CD4-positive, alpha-beta memory T cell (primary cell): ENCODE measurements at regions of chr9 and their contacts with region 1.

Region 1: GRCh38 chr9:73132034-73132776 is 19.5 kb upstream of the ANXA1 start:
- DNase-seq: peak; percentile 84 to 90 (median 89)
- H3K4me3 ChIP-seq: peak overlapping the region; percentile 62 to 75
- H3K4me3 Mint-ChIP-seq: peak overlapping the region; percentile 70 to 95 (median 92)
- H3K27ac ChIP-seq: peak overlapping the region; percentile 91
- H3K27ac Mint-ChIP-seq: peak overlapping the region; percentile 84 to 99 (median 97)
- H3K4me1 ChIP-seq: peaks cover 47% of the 10 kb centered on the region
- H3K4me1 Mint-ChIP-seq: peaks cover 24 to 50% (median 35%) of the 10 kb centered on the region in 4 donors
- H3K27me3 ChIP-seq: no peaks in the 10 kb centered on the region
- H3K27me3 Mint-ChIP-seq: no peaks in the 10 kb centered on the region

Region 2: GRCh38 chr9:73116031-73116430 is 16.2 kb before region 1 on chr9:
- CTCF ChIA-PET with region 1: interaction called, 4 read pairs
- POLR2A ChIA-PET with region 1: interaction called, 9 read pairs
- intact Hi-C with region 1: loop called (anchors 2 kb)
- DNase-seq: no peak
- H3K4me3 ChIP-seq: no peak overlapping the region
- H3K4me3 Mint-ChIP-seq: peak overlapping the region in 1 of 8 donors; percentile 18
- H3K27ac ChIP-seq: no peak overlapping the region
- H3K27ac Mint-ChIP-seq: peak overlapping the region in 4 of 7 donors; percentile 55 to 72 (median 63)
- H3K4me1 ChIP-seq: peaks cover 35% of the 10 kb centered on the region
- H3K4me1 Mint-ChIP-seq: peaks cover 23 to 45% (median 33%) of the 10 kb centered on the region in 4 donors
- H3K27me3 ChIP-seq: no peaks in the 10 kb centered on the region
- H3K27me3 Mint-ChIP-seq: no peaks in the 10 kb centered on the region

Region 3: DNA sequence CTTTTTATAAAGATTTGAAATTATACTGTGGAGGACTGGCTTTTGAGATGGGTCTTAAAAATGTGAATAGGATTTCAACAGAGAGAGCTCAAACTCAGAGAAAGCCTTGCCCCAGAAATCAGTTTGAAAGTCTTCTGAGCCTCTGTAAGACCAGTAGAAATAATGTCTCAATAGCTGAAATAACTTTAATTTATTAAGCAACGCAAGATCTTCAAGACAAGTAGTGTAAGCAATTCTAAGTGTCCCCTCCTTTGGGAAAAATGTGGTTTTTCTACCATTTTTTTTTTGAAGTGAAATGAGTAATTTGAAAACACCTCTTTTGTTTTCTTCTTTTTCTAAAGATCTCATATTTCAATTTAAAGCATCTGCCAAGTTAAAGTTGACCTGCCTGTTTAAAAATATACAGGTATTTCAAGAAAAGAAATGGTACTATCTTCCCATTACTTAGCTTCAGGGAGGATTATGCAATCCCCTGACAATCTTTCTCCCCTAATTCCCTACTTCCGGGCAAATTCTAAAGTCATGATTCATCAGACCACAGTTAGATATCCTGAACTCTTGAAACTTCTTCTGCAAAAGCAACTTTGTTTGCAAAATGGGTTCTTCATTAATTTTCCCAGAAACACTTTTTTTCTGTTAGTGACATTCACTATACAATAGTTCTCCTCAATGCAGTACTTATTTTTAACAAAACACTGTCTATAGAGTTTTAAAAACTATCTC is 11.6 kb after region 1 on chr9:
- CTCF ChIA-PET with region 1: interaction called, 6 read pairs
- POLR2A ChIA-PET with region 1: interaction called, 41 read pairs
- intact Hi-C with region 1: loop called (anchors 1 kb)
- DNase-seq: no peak
- H3K4me3 ChIP-seq: no peak overlapping the region
- H3K4me3 Mint-ChIP-seq: no peak overlapping the region
- H3K27ac ChIP-seq: no peak overlapping the region
- H3K27ac Mint-ChIP-seq: no peak overlapping the region
- H3K4me1 ChIP-seq: peaks cover 8% of the 10 kb centered on the region
- H3K4me1 Mint-ChIP-seq: peaks cover 9 to 27% (median 15%) of the 10 kb centered on the region in 4 donors
- H3K27me3 ChIP-seq: no peaks in the 10 kb centered on the region
- H3K27me3 Mint-ChIP-seq: no peaks in the 10 kb centered on the region

Region 4: DNA sequence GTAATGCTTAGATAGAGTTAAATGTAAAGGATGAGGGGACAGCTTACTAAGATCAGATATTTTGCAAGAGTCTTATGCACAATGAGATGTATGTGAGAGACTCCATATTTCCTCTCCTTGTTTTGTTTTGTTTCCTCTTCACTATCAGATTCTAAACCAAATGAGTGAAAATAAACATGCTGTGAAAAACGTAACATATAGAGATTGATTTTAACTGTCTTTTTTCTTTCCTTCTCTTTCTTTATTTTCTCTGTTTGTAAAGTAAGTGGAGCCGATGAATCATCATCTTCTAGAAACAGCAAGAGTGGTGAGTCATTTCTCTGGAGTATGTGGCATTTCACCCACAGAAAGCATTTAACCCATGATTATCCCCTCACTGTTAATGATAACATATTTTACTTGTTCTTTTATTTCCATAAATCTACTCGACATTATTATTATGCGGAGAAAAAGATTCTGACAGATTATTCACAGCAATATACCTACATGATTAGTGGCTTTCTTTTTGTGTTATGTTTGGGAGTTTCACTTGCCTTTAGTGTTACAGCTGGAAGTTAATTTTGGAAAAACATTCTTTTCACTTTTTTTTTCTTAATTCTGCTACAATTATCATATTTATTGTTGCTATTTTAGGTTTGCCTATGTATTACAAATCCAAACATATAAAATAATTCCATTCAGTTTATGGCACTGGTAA is 17.3 kb after region 1 on chr9:
- CTCF ChIA-PET with region 1: interaction called, 8 read pairs
- POLR2A ChIA-PET with region 1: interaction called, 116 read pairs
- intact Hi-C with region 1: loop called (anchors 1 kb)
- DNase-seq: peak in 4 of 5 donors; percentile 33 to 68 (median 50)
- H3K4me3 ChIP-seq: peak overlapping the region in 1 of 2 donors; percentile 17
- H3K4me3 Mint-ChIP-seq: peak overlapping the region; percentile 37 to 83 (median 78)
- H3K27ac ChIP-seq: peak overlapping the region; percentile 75
- H3K27ac Mint-ChIP-seq: peak overlapping the region; percentile 82 to 99 (median 95)
- H3K4me1 ChIP-seq: peaks cover 41% of the 10 kb centered on the region
- H3K4me1 Mint-ChIP-seq: peaks cover 24 to 51% (median 32%) of the 10 kb centered on the region in 4 donors
- H3K27me3 ChIP-seq: no peaks in the 10 kb centered on the region
- H3K27me3 Mint-ChIP-seq: no peaks in the 10 kb centered on the region

Region 5: DNA sequence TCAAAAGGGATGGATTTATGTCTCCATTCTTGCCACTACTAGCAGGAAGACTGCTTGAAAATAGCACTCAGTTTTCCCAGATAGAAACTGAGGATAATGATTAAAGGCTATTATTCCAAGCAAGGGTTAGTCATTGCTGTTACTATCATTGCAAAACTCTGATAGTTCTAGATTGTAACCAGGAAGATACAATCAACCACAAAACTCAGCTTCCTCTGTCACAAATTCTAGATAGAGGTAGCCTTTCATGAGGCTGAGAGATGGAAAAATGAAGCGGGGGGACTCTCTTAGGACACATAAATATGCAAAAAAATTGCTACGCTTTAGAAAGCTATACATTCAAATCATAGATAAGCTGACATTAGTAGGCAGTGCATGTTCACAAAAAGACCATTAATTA is 22.6 kb after region 1 on chr9:
- CTCF ChIA-PET with region 1: interaction called, 26 read pairs
- POLR2A ChIA-PET with region 1: interaction called, 116 read pairs
- intact Hi-C with region 1: loop called (anchors 1 kb)
- DNase-seq: peak; percentile 66 to 77 (median 68)
- H3K4me3 ChIP-seq: peak overlapping the region; percentile 3 to 78
- H3K4me3 Mint-ChIP-seq: peak overlapping the region; percentile 92 to 99 (median 94)
- H3K27ac ChIP-seq: peak overlapping the region; percentile 75
- H3K27ac Mint-ChIP-seq: peak overlapping the region; percentile 95 to 99 (median 97)
- H3K4me1 ChIP-seq: peaks cover 65% of the 10 kb centered on the region
- H3K4me1 Mint-ChIP-seq: peaks cover 37 to 68% (median 52%) of the 10 kb centered on the region in 4 donors
- H3K27me3 ChIP-seq: no peaks in the 10 kb centered on the region
- H3K27me3 Mint-ChIP-seq: no peaks in the 10 kb centered on the region